ENCODE measurements at regions of chr7 and their contacts with region 1.

Region 1: DNA sequence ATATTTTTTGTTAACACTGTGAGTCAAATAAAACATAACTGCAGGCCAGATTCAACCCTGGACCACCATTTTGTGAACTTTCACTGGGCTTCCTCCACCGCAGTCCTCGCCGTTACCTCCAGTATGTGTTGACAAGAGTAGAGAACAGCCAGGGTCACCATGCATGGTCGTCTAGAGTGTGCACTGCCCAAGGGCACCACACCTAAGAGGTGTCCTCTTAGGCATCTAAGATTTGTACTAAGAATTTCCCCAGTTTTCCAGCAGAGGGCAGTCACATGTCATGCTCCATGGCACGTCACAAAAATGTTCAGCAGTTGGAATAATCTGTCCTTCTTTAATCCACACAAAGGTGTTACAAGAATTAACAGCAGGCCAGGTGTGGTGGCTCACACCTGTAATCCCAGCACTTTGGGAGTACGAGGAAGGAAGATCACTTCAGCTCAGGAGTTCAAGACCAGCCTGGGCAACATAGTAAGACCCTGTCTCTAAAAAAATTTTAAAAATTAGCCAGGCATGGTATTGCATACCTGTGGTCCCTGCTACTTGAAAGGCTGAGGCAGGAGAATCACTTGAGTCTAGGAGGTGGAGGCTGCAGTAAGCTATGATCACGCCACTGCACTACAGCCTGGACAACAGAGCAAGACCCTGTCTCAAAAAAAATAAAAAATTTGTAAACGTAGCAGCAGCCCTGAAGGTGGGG is 71.2 kb upstream of the FOXK1 start:
- DNase-seq: no peak
- H3K4me3 ChIP-seq: no peak overlapping the region
- H3K27ac ChIP-seq: no peak overlapping the region
- H3K4me1 ChIP-seq: peaks cover 13% of the 10 kb centered on the region
- H3K27me3 ChIP-seq: no peaks in the 10 kb centered on the region
- CTCF ChIP-seq: peak; percentile 63 to 93 (median 72)
- POLR2A ChIP-seq: no peak

Region 2: DNA sequence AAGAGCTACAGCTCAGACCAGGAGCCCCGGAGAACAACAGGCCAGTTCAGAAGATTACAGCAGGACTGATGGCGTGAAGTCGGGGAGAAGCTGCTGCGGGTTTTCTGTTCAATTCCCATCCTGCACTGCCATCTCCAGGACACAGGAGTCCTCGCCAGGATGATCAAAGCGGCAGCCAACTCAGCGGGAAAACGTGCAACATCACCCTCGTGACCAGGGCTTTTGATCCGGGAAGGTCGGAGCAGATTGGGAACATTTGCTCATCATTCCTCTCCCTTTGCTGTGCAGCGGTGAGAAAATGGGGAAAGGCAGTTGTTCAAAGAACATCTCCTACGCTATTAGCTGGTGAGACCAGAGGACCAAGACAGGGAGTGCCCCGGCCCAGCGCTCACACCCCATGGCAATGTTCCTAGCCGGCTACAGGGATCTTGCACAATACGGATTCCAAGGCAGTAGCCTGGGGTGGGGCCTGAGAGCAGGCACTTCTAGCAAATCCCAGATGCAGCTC is 20.8 kb after region 1 on chr7:
- intact Hi-C with region 1: loop called (anchors 2 kb)
- DNase-seq: peak in 1 of 2 donors; percentile 96
- H3K4me3 ChIP-seq: peak overlapping the region; percentile 23 to 30
- H3K27ac ChIP-seq: peak overlapping the region; percentile 79
- H3K4me1 ChIP-seq: peaks cover 9% of the 10 kb centered on the region
- H3K27me3 ChIP-seq: no peaks in the 10 kb centered on the region
- CTCF ChIP-seq: peak; percentile 58 to 69 (median 67)
- POLR2A ChIP-seq: no peak

Region 3: GRCh38 chr7:4650433-4651047 is 39.6 kb after region 1 on chr7:
- intact Hi-C with region 1: no loop called
- DNase-seq: no peak
- H3K4me3 ChIP-seq: no peak overlapping the region
- H3K27ac ChIP-seq: peak overlapping the region; percentile 22
- H3K4me1 ChIP-seq: no peaks in the 10 kb centered on the region
- H3K27me3 ChIP-seq: no peaks in the 10 kb centered on the region
- CTCF ChIP-seq: no peak
- POLR2A ChIP-seq: no peak

Region 4: DNA sequence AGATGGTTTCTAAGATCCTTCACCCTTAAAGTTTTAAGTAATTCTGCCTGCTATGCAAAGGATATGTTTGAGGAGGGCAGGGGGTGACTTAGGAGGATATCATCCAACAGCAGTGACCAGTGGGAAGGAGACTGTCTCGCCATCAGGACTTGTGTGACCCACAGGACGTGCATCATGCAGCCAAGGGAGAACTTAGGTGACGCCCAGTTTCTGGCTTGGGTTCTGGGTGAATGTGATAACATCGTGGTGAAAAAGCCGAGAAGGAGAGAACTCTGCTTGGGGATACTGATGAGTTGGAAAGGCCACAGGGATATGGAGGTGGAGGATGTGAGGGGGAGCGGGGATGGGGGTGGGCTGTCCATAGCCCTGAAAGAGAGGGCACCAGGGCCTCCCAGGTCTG is 583.0 kb after region 1 on chr7:
- intact Hi-C with region 1: no loop called
- DNase-seq: no peak
- H3K4me3 ChIP-seq: no peak overlapping the region
- H3K27ac ChIP-seq: no peak overlapping the region
- H3K4me1 ChIP-seq: peaks cover 27% of the 10 kb centered on the region
- H3K27me3 ChIP-seq: no peaks in the 10 kb centered on the region
- CTCF ChIP-seq: no peak
- POLR2A ChIP-seq: no peak